Heart left ventricle (tissue), 16 donors: ENCODE measurements at regions of chr2 and their contacts with region 1.

Region 1: DNA sequence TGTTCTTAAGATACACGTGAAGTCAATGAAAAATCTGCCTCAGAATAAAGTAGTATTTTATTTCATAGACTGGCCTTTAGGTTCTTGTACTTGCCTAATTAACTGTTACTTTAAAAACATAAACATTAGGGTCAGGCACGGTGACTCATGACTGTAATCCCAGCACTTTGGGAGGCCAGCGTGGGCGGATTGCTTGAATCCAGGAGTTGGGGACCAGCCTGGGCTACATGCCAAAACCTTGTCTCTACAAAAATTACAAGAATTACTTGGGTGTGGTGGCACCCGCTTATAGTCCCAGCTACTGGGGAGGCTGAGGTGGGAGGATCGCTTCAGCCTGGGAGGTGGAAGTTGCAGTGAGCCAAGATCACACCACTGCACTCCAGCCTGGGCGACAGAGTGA is 16.0 kb upstream of the SNORC start:
- DNase-seq: no peak
- ATAC-seq: no peak
- H3K4me3 ChIP-seq: no peak overlapping the region
- H3K27ac ChIP-seq: peak overlapping the region in 1 of 12 donors; percentile 10
- H3K4me1 ChIP-seq: peaks cover 0 to 17% (median 0%) of the 10 kb centered on the region in 12 donors
- H3K27me3 ChIP-seq: no peaks in the 10 kb centered on the region
- CTCF ChIP-seq: no peak
- POLR2A ChIP-seq: no peak

Region 2: GRCh38 chr2:233026192-233026813 is 172.2 kb after region 1 on chr2:
- intact Hi-C with region 1: loop called in 2 of 10 experiments (anchors 10 kb)
- DNase-seq: no peak
- ATAC-seq: no peak
- H3K4me3 ChIP-seq: no peak overlapping the region
- H3K27ac ChIP-seq: no peak overlapping the region
- H3K4me1 ChIP-seq: no peaks in the 10 kb centered on the region
- H3K27me3 ChIP-seq: no peaks in the 10 kb centered on the region
- CTCF ChIP-seq: no peak
- POLR2A ChIP-seq: no peak

Region 3: DNA sequence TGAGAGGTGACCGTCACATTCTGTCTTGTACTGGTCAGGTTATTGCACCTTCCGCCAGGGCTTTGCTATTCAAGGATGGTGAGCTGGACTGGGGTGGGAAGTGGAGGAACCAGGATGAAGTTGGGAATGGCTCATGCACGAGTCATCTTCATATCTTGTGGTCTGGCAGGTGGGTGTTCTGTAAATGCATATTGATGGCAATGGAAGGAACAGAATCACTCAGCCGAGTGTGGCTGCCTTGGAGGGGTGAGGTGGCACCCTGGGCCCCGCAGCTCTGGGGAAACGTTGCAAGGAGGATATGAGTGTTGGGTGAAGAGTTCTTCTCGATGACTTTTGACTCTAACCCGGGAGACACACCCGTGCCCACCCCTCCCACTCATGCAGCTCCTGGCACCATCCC is 179.6 kb after region 1 on chr2:
- intact Hi-C with region 1: loop called in 2 of 10 experiments (anchors 10 kb)
- DNase-seq: no peak
- ATAC-seq: no peak
- H3K4me3 ChIP-seq: no peak overlapping the region
- H3K27ac ChIP-seq: no peak overlapping the region
- H3K4me1 ChIP-seq: no peaks in the 10 kb centered on the region
- H3K27me3 ChIP-seq: no peaks in the 10 kb centered on the region
- CTCF ChIP-seq: no peak
- POLR2A ChIP-seq: no peak

Region 4: DNA sequence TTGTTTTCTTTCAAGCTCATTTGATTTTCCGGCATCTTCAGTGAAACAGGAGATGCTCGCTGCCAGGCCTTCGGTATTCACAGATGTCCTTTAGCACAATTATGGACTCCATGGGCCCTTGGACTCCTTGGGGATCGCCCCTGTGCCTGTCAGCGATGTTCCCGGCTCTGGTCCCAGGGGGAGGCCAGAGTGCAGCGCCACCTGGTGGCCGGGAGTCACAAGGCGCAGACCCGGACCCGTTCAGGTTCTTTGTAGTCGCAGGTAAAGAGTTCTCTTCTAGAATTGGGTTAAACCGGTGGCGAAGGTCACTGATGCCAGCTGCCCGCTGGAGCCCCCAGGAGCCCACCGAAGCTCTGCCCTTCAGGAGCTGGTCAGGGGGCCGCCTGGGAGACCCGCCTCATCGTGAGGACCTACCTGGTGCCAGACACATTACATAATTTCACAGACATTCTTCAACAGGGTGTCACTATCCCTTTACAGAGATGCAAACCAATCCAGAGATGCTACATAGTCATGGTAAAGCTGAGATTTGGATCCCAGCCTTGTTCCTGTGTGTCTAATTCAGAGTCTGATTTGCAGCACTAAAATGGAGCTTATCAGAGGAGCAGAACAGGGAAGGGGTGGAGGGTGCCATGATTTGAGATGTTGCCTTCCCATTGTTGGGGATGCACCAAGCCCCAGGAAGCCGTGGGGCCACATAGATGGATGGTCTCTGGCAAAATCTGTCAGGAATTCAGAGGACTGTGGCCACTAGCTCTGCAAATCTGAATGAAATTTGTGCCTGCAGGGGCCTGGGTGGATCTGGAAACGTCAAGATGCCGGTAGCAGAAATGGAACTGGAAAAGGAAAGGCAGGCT is 200.1 kb after region 1 on chr2:
- intact Hi-C with region 1: loop called in 6 of 10 experiments (anchors 10 kb)
- DNase-seq: peak; percentile 47 to 81 (median 56)
- ATAC-seq: peak in 2 of 4 donors; percentile 50 to 51
- H3K4me3 ChIP-seq: no peak overlapping the region
- H3K27ac ChIP-seq: no peak overlapping the region
- H3K4me1 ChIP-seq: peaks cover 0 to 29% (median 13%) of the 10 kb centered on the region in 12 donors
- H3K27me3 ChIP-seq: peaks cover 0 to 16% (median 0%) of the 10 kb centered on the region in 9 donors
- CTCF ChIP-seq: peak; percentile 77 to 96 (median 90)
- POLR2A ChIP-seq: no peak